PC-3 (cell line): ENCODE measurements at regions of chr3 and their contacts with region 1.

Region 1: GRCh38 chr3:48478596-48479555 is 25.1 kb downstream of the SHISA5 start:
- DNase-seq: no peak
- ATAC-seq: no peak
- H3K4me3 ChIP-seq: no peak overlapping the region
- H3K27ac ChIP-seq: no peak overlapping the region
- H3K4me1 ChIP-seq: no peaks in the 10 kb centered on the region
- H3K27me3 ChIP-seq: no peaks in the 10 kb centered on the region
- CTCF ChIP-seq: no peak

Region 2: GRCh38 chr3:48394391-48394790 is 84.5 kb before region 1 on chr3:
- CTCF ChIA-PET with region 1: no interaction called
- POLR2A ChIA-PET with region 1: no interaction called
- intact Hi-C with region 1: no loop called
- DNase-seq: no peak
- ATAC-seq: no peak
- H3K4me3 ChIP-seq: no peak overlapping the region
- H3K27ac ChIP-seq: no peak overlapping the region
- H3K4me1 ChIP-seq: no peaks in the 10 kb centered on the region
- H3K27me3 ChIP-seq: no peaks in the 10 kb centered on the region
- CTCF ChIP-seq: no peak

Region 3: DNA sequence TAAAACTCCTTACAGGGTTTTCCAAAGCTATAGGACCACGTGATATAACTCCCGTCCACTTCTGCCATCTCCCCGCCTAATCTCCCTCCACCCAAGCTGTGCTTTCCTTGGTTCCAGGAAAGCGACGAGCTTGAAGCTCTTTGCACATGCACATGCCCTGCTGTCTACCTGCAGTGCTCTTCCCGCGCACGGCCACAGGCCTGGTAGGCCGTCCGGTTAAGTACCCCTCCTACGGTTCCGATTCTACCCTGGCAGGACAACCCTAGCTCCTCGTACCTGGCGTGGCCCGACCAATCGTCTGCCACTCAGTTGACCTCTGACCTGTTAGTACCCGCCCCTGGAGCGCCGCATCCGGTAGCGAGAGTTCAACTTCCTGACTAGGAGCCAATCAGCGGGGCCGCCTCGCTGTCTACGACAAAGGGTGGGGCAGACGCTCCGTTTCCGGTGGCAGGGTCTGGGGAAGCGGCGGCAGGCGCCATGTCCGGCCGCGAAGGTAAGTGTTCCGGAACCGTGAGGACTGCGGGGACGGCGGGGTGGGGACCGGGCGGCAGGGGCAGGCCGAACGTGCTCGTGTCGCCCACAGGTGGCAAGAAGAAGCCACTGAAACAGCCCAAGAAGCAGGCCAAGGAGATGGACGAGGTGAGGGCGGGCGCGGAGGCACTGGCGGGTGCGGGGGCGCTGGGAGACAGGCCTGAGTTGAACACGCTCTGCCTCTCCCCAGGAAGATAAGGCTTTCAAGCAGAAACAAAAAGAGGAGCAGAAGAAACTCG is 38.9 kb before region 1 on chr3 and contains the starts of genes CCDC51 and TMA7:
- CTCF ChIA-PET with region 1: no interaction called
- POLR2A ChIA-PET with region 1: no interaction called
- intact Hi-C with region 1: no loop called
- DNase-seq: peak; percentile 99
- ATAC-seq: peak; percentile 91
- H3K4me3 ChIP-seq: peak within 1 kb of the TSS; percentile 99
- H3K27ac ChIP-seq: peak within 1 kb of the TSS; percentile 56
- H3K4me1 ChIP-seq: peaks cover 17% of the 10 kb centered on the region
- H3K27me3 ChIP-seq: no peaks in the 10 kb centered on the region
- CTCF ChIP-seq: no peak
- total RNA-seq, gene CCDC51: 27.8 and 30.9 TPM in 2 replicates
- total RNA-seq, gene TMA7: 517 and 618 TPM in 2 replicates

Region 4: GRCh38 chr3:48514436-48515227 is 35.8 kb after region 1 on chr3:
- CTCF ChIA-PET with region 1: no interaction called
- POLR2A ChIA-PET with region 1: no interaction called
- intact Hi-C with region 1: no loop called
- DNase-seq: no peak
- ATAC-seq: no peak
- H3K4me3 ChIP-seq: no peak overlapping the region
- H3K27ac ChIP-seq: no peak overlapping the region
- H3K4me1 ChIP-seq: no peaks in the 10 kb centered on the region
- H3K27me3 ChIP-seq: no peaks in the 10 kb centered on the region
- CTCF ChIP-seq: no peak

Region 5: GRCh38 chr3:49553692-49554632 is 1075.1 kb after region 1 on chr3 and contains the start of gene BSN:
- CTCF ChIA-PET with region 1: interaction called, 11 read pairs
- POLR2A ChIA-PET with region 1: no interaction called
- intact Hi-C with region 1: no loop called
- DNase-seq: peak; percentile 91
- ATAC-seq: peak; percentile 82
- H3K4me3 ChIP-seq: peak within 1 kb of the TSS; percentile 80
- H3K27ac ChIP-seq: no peak within 1 kb of the TSS
- H3K4me1 ChIP-seq: peaks cover 15% of the 10 kb centered on the region
- H3K27me3 ChIP-seq: peaks cover 14% of the 10 kb centered on the region; the same call in 1 of the 2 replicates
- CTCF ChIP-seq: no peak
- total RNA-seq, gene BSN: 0.80 and 0.92 TPM in 2 replicates